A549 (cell line): ENCODE measurements at regions of chr21 and their contacts with region 1.

Region 1: DNA sequence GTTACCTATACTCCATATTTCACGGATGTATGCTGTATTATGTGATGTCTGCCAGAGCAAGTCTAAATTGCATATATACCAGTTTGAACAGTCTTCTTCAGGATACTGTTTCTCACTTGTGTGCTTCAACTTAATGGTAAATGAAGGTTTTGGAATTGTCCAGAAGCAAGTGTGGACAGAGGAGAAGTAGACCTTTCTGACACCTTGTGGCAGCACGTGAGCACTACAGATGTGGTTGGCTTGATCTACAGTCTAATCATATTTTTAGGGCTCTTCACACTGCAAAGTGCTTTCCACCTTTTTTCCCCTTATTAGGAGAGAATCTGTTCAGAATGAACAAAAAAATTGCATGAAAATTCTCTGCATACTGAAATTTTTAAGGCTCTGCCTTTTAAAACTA is 10.9 kb downstream of the MORC3 start:
- DNase-seq: peak; percentile 18 to 53
- ATAC-seq: peak; percentile 86 to 89
- H3K4me3 ChIP-seq: no peak overlapping the region
- H3K27ac ChIP-seq: no peak overlapping the region
- H3K4me1 ChIP-seq: peaks cover 7% of the 10 kb centered on the region; the same call in 1 of the 3 replicates
- CTCF ChIP-seq: peak; percentile 46
- EP300 ChIP-seq: no peak
- POLR2A ChIP-seq: no peak
- RAD21 ChIP-seq: peak; percentile 54 to 60

Region 2: DNA sequence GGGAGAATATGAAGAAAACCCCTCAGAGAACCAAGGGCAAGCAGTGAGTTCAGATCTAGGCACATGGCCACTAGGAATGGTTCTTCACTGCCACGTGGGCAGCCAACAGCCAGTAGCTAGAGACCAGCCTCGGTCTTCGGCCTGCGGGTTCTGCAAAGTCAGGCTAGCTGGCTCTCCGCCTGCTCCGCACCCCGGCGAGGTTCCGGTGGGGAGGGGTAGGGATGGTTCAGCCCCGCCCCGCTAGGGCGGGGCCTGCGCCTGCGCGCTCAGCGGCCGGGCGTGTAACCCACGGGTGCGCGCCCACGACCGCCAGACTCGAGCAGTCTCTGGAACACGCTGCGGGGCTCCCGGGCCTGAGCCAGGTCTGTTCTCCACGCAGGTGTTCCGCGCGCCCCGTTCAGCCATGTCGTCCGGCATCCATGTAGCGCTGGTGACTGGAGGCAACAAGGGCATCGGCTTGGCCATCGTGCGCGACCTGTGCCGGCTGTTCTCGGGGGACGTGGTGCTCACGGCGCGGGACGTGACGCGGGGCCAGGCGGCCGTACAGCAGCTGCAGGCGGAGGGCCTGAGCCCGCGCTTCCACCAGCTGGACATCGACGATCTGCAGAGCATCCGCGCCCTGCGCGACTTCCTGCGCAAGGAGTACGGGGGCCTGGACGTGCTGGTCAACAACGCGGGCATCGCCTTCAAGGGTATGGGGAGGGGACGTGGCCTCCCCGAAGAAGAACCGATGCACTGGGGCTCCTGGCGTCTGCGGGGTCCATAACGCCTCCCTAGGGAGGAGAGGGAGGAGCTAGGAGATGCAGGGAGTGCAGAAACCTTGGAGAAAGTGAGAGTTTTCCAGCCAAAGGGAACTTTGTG is 261.0 kb before region 1 on chr21 and contains the start of gene CBR1:
- CTCF ChIA-PET with region 1: no interaction called
- POLR2A ChIA-PET with region 1: interaction called, 12 read pairs
- DNase-seq: peak; percentile 65 to 94
- ATAC-seq: peak; percentile 98 to 99
- H3K4me3 ChIP-seq: peak within 1 kb of the TSS; percentile 94
- H3K27ac ChIP-seq: peak within 1 kb of the TSS; percentile 94 to 95
- H3K4me1 ChIP-seq: peaks cover 32% of the 10 kb centered on the region
- CTCF ChIP-seq: no peak
- EP300 ChIP-seq: no peak
- POLR2A ChIP-seq: peak; percentile 83
- RAD21 ChIP-seq: no peak
- polyA plus RNA-seq, gene CBR1: 154 and 165 TPM in 2 replicates

Region 3: DNA sequence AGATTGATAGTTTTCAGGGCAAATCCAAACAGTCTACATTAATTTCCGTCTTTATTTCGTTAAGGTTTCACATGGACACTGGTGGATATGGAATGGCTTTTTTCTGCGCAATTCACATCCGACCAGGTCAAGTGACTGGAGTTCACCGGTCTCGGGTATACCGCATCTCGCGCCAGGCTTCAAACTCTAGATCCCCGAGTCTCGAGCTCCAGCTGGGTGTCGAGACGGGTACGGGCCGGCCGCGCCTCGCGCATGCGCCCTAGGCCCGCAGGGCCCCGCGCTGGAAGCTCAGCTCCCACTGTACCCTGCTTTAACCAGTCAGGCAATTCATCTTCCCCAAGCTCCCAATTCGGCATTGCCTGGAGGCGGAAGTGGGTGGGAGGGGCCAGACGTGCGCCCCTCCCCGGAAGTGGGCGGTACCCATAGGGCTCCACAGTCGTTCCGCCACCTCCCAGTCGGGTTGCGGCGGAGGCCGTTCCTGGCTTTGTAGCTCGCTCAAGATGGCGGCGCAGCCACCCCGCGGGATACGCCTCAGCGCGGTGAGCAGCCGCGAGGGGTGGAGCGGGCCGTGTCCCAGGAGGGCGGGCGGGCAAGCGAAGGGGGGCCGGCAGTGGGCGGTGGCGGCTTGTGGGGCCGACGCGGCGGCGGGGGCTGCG is 11.0 kb before region 1 on chr21 and contains the start of gene MORC3:
- CTCF ChIA-PET with region 1: interaction called, 5 read pairs
- POLR2A ChIA-PET with region 1: interaction called, 10 read pairs
- DNase-seq: peak; percentile 91 to 97
- ATAC-seq: peak; percentile 95
- H3K4me3 ChIP-seq: peak within 1 kb of the TSS; percentile 88
- H3K27ac ChIP-seq: peak within 1 kb of the TSS; percentile 96 to 99
- H3K4me1 ChIP-seq: peaks cover 21% of the 10 kb centered on the region
- CTCF ChIP-seq: no peak
- EP300 ChIP-seq: no peak
- POLR2A ChIP-seq: peak; percentile 69
- RAD21 ChIP-seq: no peak
- polyA plus RNA-seq, gene MORC3: 15.0 and 21.5 TPM in 2 replicates

Region 4: GRCh38 chr21:36806103-36806502 is 475.2 kb after region 1 on chr21:
- CTCF ChIA-PET with region 1: no interaction called
- POLR2A ChIA-PET with region 1: no interaction called
- DNase-seq: no peak
- ATAC-seq: no peak
- H3K4me3 ChIP-seq: no peak overlapping the region
- H3K27ac ChIP-seq: no peak overlapping the region
- H3K4me1 ChIP-seq: peaks cover 10% of the 10 kb centered on the region
- CTCF ChIP-seq: no peak
- EP300 ChIP-seq: no peak
- POLR2A ChIP-seq: no peak
- RAD21 ChIP-seq: no peak